GM12878 (cell line): ENCODE measurements at regions of chr10 and their contacts with region 1.

Region 1: GRCh38 chr10:19958787-19959186 is 142.6 kb downstream of the PLXDC2 start:
- DNase-seq: peak; percentile 37
- ATAC-seq: peak; percentile 98
- H3K4me3 ChIP-seq: no peak overlapping the region
- H3K27ac ChIP-seq: no peak overlapping the region
- H3K4me1 ChIP-seq: no peaks in the 10 kb centered on the region
- H3K27me3 ChIP-seq: no peaks in the 10 kb centered on the region
- CTCF ChIP-seq: no peak
- EP300 ChIP-seq: no peak; a peak in 1 of 4 replicates
- POLR2A ChIP-seq: no peak
- RAD21 ChIP-seq: no peak

Region 2: DNA sequence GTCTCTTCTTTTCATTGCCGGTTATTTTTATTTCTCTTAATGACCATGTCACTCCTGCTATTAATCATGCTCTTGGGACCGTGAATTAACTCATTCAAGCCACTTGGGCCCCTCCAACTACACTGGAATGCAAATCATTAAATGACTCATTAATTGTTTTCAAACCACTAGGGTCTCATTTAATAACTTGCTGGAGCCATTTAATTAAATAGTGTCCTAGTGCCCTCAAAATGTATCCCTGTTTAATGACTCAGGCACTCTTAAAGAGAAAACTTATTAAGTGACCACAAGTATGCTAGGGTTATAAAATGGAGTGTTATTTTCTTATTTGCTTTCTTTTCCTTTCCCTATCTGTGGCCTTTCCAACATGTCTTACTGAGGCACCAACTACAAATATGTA is 69.5 kb before region 1 on chr10:
- CTCF ChIA-PET with region 1: no interaction called
- POLR2A ChIA-PET with region 1: no interaction called
- RAD21 ChIA-PET with region 1: no interaction called
- SMC1A ChIA-PET with region 1: no interaction called
- in situ Hi-C with region 1: no loop called
- intact Hi-C with region 1: no loop called
- DNase-seq: no peak
- ATAC-seq: no peak; the same call in 1 of the 3 replicates
- H3K4me3 ChIP-seq: no peak overlapping the region
- H3K27ac ChIP-seq: no peak overlapping the region
- H3K4me1 ChIP-seq: no peaks in the 10 kb centered on the region
- H3K27me3 ChIP-seq: no peaks in the 10 kb centered on the region
- CTCF ChIP-seq: no peak
- EP300 ChIP-seq: no peak
- POLR2A ChIP-seq: no peak
- RAD21 ChIP-seq: no peak

Region 3: DNA sequence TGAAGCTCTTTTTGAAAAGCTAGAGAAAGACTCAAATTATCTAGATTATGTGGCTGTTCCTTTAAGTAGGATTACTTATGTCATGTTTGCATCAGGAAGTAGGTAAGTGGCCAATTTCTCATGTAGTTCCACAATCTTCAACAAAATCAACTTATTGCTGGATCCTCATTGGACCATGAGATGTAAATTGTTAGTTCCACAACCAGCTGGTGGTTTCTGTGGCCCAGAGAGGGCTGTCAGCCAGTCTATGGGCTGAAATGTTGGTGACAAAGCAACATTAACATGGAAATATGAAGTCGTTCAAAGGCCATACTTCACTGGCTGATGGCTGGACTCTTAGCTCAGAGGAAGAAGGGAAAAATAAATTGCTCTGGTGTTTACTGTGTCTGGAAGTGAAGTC is 15.4 kb after region 1 on chr10:
- CTCF ChIA-PET with region 1: interaction called, 3 read pairs
- POLR2A ChIA-PET with region 1: interaction called, 4 read pairs
- RAD21 ChIA-PET with region 1: interaction called, 5 read pairs
- SMC1A ChIA-PET with region 1: interaction called, 44 read pairs
- in situ Hi-C with region 1: no loop called
- intact Hi-C with region 1: no loop called
- DNase-seq: no peak
- ATAC-seq: peak; percentile 34
- H3K4me3 ChIP-seq: no peak overlapping the region
- H3K27ac ChIP-seq: no peak overlapping the region
- H3K4me1 ChIP-seq: no peaks in the 10 kb centered on the region
- H3K27me3 ChIP-seq: no peaks in the 10 kb centered on the region
- CTCF ChIP-seq: no peak
- EP300 ChIP-seq: no peak
- POLR2A ChIP-seq: no peak
- RAD21 ChIP-seq: no peak

Region 4: GRCh38 chr10:20004087-20004523 is 45.3 kb after region 1 on chr10:
- CTCF ChIA-PET with region 1: interaction called, 5 read pairs
- POLR2A ChIA-PET with region 1: interaction called, 4 read pairs
- RAD21 ChIA-PET with region 1: interaction called, 22 read pairs
- SMC1A ChIA-PET with region 1: interaction called, 17 read pairs
- in situ Hi-C with region 1: no loop called
- intact Hi-C with region 1: no loop called
- DNase-seq: peak; percentile 28
- ATAC-seq: peak; percentile 85
- H3K4me3 ChIP-seq: no peak overlapping the region
- H3K27ac ChIP-seq: peak overlapping the region; percentile 75
- H3K4me1 ChIP-seq: peaks cover 10% of the 10 kb centered on the region
- H3K27me3 ChIP-seq: no peaks in the 10 kb centered on the region
- CTCF ChIP-seq: no peak
- EP300 ChIP-seq: no peak
- POLR2A ChIP-seq: no peak
- RAD21 ChIP-seq: no peak

Region 5: DNA sequence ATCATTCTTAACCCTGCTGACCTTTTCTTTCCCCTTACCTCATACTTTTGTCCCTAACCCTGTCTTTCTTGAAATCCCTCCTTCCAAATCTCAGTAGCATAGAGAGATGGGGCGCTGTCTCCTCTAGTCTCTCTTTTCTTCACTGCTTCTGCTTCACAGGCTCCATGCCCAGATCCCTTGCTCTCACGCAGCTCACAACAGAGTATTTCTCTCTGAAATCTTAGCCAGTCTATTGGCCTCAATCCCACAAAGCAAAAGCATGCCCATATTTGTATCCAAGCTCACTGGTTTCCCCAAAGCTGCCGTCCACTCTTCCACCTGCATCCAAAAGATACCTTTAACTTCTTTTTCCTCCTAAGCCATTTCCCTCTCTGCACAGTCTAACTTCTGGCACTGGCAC is 384.2 kb after region 1 on chr10:
- CTCF ChIA-PET with region 1: no interaction called
- POLR2A ChIA-PET with region 1: no interaction called
- RAD21 ChIA-PET with region 1: no interaction called
- SMC1A ChIA-PET with region 1: no interaction called
- in situ Hi-C with region 1: no loop called
- intact Hi-C with region 1: no loop called
- DNase-seq: no peak
- ATAC-seq: no peak
- H3K4me3 ChIP-seq: no peak overlapping the region
- H3K27ac ChIP-seq: no peak overlapping the region
- H3K4me1 ChIP-seq: no peaks in the 10 kb centered on the region
- H3K27me3 ChIP-seq: no peaks in the 10 kb centered on the region
- CTCF ChIP-seq: no peak
- EP300 ChIP-seq: no peak
- POLR2A ChIP-seq: no peak
- RAD21 ChIP-seq: no peak